Activated B cell treated with CpG ODN at 0.5 μM for 24 hours (primary cell): ENCODE measurements at regions of chr4 and their contacts with region 1.

Region 1: GRCh38 chr4:146342600-146343192 is 128.4 kb downstream of the REELD1 start:
- DNase-seq: no peak
- ATAC-seq: no peak
- H3K4me3 Mint-ChIP-seq: no peak overlapping the region
- H3K27ac Mint-ChIP-seq: no peak overlapping the region
- H3K4me1 Mint-ChIP-seq: peaks cover 5% of the 10 kb centered on the region
- H3K27me3 Mint-ChIP-seq: no peaks in the 10 kb centered on the region
- CTCF ChIP-seq: no peak

Region 2: GRCh38 chr4:146522098-146522868 is 179.6 kb after region 1 on chr4:
- CTCF ChIA-PET with region 1: no interaction called
- POLR2A ChIA-PET with region 1: no interaction called
- intact Hi-C with region 1: loop called (anchors 10 kb)
- DNase-seq: peak; percentile 75
- ATAC-seq: peak; percentile 80
- H3K4me3 Mint-ChIP-seq: no peak overlapping the region
- H3K27ac Mint-ChIP-seq: no peak overlapping the region
- H3K4me1 Mint-ChIP-seq: peaks cover 21% of the 10 kb centered on the region
- H3K27me3 Mint-ChIP-seq: no peaks in the 10 kb centered on the region
- CTCF ChIP-seq: no peak

Region 3: DNA sequence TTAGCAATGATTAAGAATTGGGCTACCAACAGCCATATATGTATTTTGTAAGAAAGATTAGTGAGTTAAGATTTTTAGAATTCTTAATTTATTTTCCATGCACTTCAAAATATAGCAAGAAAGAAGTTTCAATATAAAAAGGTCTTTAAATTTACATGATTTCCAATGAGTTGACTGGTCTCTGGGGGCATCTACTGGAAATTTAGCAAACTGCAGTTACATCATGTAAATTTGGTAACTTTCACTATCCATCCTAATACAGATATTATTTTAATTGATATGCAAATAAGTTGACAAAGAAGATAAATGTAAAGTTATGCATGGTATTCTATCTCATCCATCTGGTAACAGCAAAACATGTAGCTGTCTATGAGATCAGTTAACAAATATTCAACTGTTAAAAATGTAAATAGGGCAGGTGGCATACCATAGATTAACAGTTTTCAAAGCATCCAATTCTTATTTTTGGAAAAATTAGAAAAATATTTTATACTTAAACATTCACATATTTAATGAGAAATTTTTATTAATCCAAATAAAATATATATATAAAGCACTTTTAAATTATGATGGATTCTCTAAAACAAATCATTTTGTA is 573.9 kb after region 1 on chr4:
- CTCF ChIA-PET with region 1: interaction called, 3 read pairs
- POLR2A ChIA-PET with region 1: no interaction called
- intact Hi-C with region 1: loop called (anchors 1 kb)
- DNase-seq: no peak
- ATAC-seq: no peak
- H3K4me3 Mint-ChIP-seq: no peak overlapping the region
- H3K27ac Mint-ChIP-seq: no peak overlapping the region
- H3K4me1 Mint-ChIP-seq: no peaks in the 10 kb centered on the region
- H3K27me3 Mint-ChIP-seq: peaks cover 8% of the 10 kb centered on the region
- CTCF ChIP-seq: no peak

Region 4: GRCh38 chr4:147096667-147097604 is 754.2 kb after region 1 on chr4:
- CTCF ChIA-PET with region 1: interaction called, 58 read pairs
- POLR2A ChIA-PET with region 1: no interaction called
- intact Hi-C with region 1: loop called (anchors 1 kb)
- DNase-seq: no peak
- ATAC-seq: peak; percentile 37
- H3K4me3 Mint-ChIP-seq: no peak overlapping the region
- H3K27ac Mint-ChIP-seq: no peak overlapping the region
- H3K4me1 Mint-ChIP-seq: no peaks in the 10 kb centered on the region
- H3K27me3 Mint-ChIP-seq: peaks cover 18% of the 10 kb centered on the region
- CTCF ChIP-seq: peak; percentile 47

Region 5: DNA sequence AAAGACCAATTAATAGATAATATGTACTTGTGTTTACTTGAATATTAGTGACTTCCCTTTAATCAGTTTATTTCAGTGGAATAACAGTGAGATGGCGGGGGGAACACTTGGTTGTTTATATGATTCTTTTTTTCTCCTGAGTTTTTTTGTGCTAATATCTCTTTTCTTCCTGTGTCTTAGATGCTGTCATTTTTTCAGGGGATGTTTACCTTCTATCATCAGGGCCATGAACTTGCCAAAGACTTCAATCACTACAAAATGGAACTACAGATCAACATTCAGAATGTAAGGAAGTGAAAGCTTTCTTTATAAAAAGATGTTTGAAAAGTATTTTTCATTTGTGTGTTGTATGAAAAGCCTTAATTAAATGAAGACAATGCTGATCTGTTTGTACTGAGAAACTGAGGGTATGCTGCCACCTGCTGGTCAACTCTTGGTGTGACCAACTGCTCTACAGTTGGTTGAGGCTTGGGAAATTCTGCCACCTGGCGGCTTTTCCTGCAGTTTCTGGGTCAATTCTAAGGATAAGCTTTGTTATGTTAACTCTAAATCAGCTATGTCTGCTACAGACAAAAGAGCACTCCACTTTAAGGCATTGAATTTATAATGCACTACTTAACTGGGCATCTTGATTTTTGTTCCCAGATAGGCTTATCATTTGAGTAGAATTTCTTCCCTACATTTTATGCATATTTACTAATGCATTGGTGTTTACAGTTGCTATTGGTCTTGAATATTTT is 1524.0 kb after region 1 on chr4:
- CTCF ChIA-PET with region 1: no interaction called
- POLR2A ChIA-PET with region 1: no interaction called
- intact Hi-C with region 1: loop called (anchors 10 kb)
- DNase-seq: peak; percentile 61
- ATAC-seq: peak; percentile 95
- H3K4me3 Mint-ChIP-seq: no peak overlapping the region
- H3K27ac Mint-ChIP-seq: no peak overlapping the region
- H3K4me1 Mint-ChIP-seq: no peaks in the 10 kb centered on the region
- H3K27me3 Mint-ChIP-seq: no peaks in the 10 kb centered on the region
- CTCF ChIP-seq: peak; percentile 99